Psoas muscle (tissue), 8 donors: ENCODE measurements at regions of chr12 and their contacts with region 1.

Region 1: DNA sequence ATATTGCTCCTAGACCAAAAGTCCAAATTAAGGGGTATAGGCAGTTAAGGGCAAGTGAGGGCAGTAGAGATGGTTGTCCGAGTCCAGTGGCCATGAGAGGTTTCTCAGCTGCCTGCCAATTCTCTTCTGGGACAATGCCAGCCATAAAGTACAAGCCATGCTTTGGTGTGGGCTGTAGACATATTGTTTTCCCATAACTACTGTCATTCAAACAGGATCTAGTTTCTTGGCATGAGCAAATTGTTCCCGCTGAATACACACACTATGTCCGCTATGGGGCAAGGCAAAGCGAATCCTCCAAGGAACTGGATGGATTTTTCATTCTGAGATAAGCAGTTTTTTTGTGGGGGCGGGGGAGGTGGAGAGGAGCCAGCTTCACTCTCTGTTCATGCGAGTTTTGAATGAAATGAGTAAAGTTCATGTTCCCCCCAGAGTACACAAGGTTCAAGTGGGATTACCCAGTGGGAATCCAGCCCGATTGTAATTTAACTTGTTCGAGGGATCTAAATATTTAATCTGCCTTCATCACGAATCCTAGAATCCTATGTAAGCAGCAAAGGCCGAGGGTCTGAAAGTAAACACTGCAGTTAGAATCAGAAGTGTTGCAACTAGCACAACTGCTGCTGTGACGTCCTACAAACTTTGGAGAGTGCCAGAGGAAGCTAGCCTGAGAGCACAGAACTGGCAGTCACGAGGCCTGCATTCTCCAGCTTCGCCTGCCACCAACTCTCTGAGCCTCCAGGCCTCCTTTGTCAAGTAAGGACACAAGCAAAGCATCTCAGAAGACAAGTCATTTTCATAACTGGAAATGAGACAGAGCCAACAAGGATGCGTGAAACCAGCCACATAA is 137.0 kb downstream of the CRADD start:
- DNase-seq: peak; percentile 81 to 90
- ATAC-seq: peak; percentile 91 to 94 (median 93)
- H3K4me3 ChIP-seq: peak overlapping the region; percentile 58
- H3K27ac ChIP-seq: peak overlapping the region; percentile 95
- H3K4me1 ChIP-seq: peaks cover 40% of the 10 kb centered on the region
- H3K27me3 ChIP-seq: no peaks in the 10 kb centered on the region
- CTCF ChIP-seq: no peak

Region 2: DNA sequence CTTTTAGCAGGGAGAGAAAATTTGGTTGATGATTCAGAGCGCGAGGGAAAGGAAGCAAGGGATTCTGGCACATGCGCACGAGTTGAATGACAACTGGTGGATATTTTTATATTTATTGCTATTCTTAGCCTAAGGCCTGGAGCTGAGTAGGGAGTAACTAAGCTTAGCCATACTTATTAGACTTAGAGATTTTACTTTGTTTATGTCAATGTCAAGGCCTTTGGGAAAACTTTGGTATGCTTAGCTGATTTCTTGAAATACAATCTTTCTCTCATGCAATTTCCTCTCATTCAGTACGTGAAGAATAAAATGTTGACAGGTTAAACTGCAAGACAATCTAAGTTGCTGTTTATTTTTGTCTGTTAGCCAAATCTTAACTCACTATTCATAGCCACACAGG is 35.9 kb before region 1 on chr12:
- intact Hi-C with region 1: loop called (anchors 5 kb)
- DNase-seq: peak; percentile 59 to 64
- ATAC-seq: peak; percentile 89 to 96 (median 91)
- H3K4me3 ChIP-seq: no peak overlapping the region
- H3K27ac ChIP-seq: peak overlapping the region; percentile 89
- H3K4me1 ChIP-seq: peaks cover 58% of the 10 kb centered on the region
- H3K27me3 ChIP-seq: no peaks in the 10 kb centered on the region
- CTCF ChIP-seq: no peak